ENCODE measurements at regions of chr1 and their contacts with region 1.

Region 1: DNA sequence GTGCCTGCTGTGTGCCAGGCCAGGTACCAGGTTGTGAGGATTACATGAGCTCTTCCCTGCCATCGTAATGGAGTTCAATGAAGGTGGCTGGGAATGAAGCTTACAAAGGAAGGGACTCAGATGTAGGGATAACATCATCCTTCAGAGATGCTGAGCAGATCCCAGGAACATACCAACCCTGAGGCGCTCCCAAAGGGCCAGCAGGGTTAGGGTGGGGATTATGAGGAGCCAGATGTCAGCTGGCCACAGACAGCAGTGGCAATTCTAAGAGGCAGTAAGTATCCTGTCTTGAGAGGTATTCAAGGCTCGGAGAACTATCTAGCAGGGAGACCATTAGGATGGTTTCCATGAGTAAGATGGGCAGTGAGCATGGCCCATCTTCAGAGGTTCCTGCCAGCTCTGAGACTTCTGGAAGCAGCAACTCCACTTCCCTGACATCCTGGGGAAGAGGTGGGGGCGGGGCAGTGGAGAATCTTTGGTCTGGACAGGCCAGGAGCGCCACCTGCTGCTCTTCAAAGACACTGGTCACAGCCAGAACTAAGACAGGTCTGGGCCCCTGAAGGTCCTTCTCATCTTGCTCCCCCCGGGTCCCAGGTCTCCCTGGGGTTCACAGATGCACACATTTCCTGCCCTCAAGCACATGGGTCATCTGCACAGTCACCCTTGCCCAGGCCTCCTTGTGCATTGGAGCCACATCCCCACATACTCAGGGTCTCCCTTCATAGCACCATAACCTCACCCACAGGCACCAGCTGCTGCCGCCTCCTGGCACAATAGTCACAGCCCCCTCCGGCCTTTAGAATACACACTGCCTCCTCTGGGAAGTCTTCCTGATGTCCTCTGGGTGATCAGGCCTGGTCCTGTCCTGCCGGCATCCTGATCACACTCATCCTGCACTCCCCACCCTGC is 2.7 kb upstream of the SDC3 start:
- DNase-seq: peak; percentile 92
- H3K4me3 ChIP-seq: no peak overlapping the region
- H3K27ac ChIP-seq: no peak overlapping the region
- H3K4me1 ChIP-seq: peaks cover 8% of the 10 kb centered on the region
- H3K27me3 ChIP-seq: no peaks in the 10 kb centered on the region
- CTCF ChIP-seq: peak; percentile 69 to 81 (median 74)
- POLR2A ChIP-seq: no peak

Region 2: GRCh38 chr1:30719406-30720270 is 191.7 kb before region 1 on chr1:
- intact Hi-C with region 1: loop called (anchors 10 kb)
- DNase-seq: no peak
- H3K4me3 ChIP-seq: peak overlapping the region; percentile 60 to 66
- H3K27ac ChIP-seq: peak overlapping the region; percentile 98
- H3K4me1 ChIP-seq: peaks cover 9% of the 10 kb centered on the region
- H3K27me3 ChIP-seq: no peaks in the 10 kb centered on the region
- CTCF ChIP-seq: peak in 1 of 3 experiments; percentile 3
- POLR2A ChIP-seq: no peak

Region 3: DNA sequence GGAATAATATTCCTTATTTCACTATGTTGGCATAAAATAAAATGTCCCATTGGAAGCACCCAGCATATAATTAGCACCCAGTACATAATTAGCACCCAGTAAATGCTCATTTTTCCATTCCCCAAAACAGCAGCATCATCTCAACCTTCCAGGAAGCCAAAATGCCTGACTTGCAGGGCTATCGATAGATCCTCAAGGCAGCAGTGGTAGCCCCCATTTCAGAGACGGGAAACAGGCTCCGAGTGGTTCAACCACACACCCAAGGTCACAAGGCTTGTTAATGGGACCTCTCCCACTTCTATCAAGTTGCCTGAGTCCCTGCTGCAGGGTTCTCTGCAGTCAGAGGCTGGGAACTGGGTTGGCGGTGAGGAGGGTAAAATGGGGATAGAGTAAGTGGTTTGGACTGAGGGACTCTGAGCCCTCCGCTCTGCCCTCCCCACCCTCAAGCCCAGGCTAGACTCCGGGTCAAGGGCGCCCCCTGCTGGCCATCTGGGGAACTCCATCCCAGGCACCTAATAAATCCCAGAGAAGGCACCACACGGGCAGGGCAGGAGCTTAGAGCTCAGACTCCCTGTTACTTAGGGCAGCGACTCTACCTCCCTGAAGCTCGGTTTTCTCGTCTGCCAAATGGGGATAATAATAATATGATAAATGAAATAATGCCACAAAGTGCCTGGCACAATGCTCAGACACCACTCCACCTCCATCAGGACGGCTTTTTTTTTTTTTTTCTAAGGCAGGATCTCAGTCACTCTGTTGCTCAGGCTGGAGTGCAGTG is 131.8 kb before region 1 on chr1:
- intact Hi-C with region 1: loop called (anchors 5 kb)
- DNase-seq: peak; percentile 91
- H3K4me3 ChIP-seq: no peak overlapping the region
- H3K27ac ChIP-seq: no peak overlapping the region
- H3K4me1 ChIP-seq: peaks cover 13% of the 10 kb centered on the region
- H3K27me3 ChIP-seq: no peaks in the 10 kb centered on the region
- CTCF ChIP-seq: peak; percentile 99 to 100 (median 99)
- POLR2A ChIP-seq: no peak

Region 4: DNA sequence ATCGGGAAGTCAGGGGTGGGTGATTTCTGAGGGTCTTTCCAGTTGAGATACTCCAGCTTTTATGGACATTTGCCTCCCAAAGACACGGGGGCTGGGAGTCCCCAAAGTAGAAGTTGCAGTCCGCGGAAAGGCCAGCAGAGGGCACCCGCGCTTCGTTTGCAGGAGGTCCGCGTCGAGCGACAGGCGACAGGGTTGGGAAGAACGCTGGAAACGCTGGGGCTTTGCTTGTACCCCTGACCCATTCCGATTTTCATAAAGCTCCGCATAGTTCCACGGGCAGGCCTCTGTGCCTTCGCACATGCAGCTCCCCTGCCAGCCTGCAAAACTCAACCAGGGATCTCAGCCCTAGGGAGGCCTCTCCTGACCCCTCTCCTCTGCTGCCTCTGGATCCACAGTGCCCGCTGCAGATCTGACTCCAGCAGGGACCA is 109.5 kb before region 1 on chr1:
- intact Hi-C with region 1: loop called (anchors 5 kb)
- DNase-seq: peak; percentile 90
- H3K4me3 ChIP-seq: peak overlapping the region in 1 of 2 donors; percentile 31
- H3K27ac ChIP-seq: no peak overlapping the region
- H3K4me1 ChIP-seq: peaks cover 16% of the 10 kb centered on the region
- H3K27me3 ChIP-seq: no peaks in the 10 kb centered on the region
- CTCF ChIP-seq: peak; percentile 82 to 96 (median 86)
- POLR2A ChIP-seq: no peak

Region 5: GRCh38 chr1:30823969-30824735 is 87.1 kb before region 1 on chr1:
- intact Hi-C with region 1: no loop called
- DNase-seq: peak; percentile 96
- H3K4me3 ChIP-seq: peak overlapping the region in 1 of 2 donors; percentile 34
- H3K27ac ChIP-seq: peak overlapping the region; percentile 87
- H3K4me1 ChIP-seq: peaks cover 13% of the 10 kb centered on the region
- H3K27me3 ChIP-seq: no peaks in the 10 kb centered on the region
- CTCF ChIP-seq: no peak
- POLR2A ChIP-seq: no peak

Region 6: DNA sequence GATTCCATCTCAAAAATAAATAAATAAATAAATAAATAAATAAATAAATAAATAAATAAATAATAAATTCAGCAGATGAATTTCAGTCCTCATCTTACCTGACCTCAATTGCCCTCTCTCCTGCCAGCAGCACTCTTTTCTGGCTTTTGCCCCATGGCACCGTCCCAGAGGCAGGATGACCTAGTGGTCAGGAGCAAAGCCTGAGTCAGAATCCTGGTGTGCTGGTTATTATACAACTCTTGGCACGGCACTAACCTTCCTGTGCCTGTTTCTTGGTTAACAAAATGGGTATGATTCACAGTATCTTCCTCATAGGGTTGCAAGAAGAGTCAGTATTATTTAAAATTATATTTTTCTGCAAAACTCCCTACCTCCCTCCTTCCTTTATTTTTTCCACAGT is 285.4 kb after region 1 on chr1:
- intact Hi-C with region 1: no loop called
- DNase-seq: no peak
- H3K4me3 ChIP-seq: no peak overlapping the region
- H3K27ac ChIP-seq: no peak overlapping the region
- H3K4me1 ChIP-seq: no peaks in the 10 kb centered on the region
- H3K27me3 ChIP-seq: no peaks in the 10 kb centered on the region
- CTCF ChIP-seq: no peak
- POLR2A ChIP-seq: no peak